ENCODE measurements at regions of chr11 and their contacts with region 1.

Region 1: DNA sequence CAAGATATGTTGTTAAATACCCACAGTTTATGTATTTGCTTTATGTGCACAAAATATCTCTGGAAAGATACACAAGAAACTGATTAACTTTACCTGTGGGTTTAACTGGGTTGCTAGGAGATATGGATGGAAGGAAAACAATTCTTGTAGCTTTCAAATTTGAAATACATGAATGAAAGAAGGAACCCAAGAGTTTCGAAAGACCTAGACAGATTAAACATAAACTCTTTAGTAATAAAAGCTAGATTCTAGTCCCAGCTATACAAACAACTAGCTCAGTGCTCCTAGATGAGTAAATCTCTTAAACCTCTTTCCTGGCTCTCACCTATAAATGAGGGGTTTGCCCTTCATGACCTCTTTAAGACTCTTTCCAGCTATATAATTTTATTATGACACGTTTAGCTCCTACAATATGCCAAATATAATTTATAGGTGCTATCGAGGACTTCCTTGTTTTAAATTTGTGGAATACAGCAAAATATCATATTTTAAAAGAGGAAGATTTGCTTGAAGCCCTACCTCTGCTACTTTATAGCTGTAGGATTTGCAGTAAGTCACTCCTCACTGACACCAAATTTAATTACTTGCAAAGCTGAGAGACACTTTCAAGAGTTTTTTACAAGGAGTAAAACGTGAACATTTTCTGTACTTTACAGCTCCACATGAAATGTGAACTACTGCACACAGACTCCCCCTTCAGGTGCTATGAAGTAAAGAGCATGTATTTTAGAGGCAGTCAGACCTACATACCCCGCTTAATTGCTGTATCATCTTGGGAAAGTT is 50.7 kb downstream of the RRAS2 start:
- DNase-seq: peak in 1 of 2 donors; percentile 64
- ATAC-seq: peak; percentile 79 to 92 (median 88)
- H3K4me3 ChIP-seq: no peak overlapping the region
- H3K4me3 Mint-ChIP-seq: no peak overlapping the region
- H3K27ac ChIP-seq: peak overlapping the region; percentile 41
- H3K27ac Mint-ChIP-seq: no peak overlapping the region
- H3K4me1 ChIP-seq: peaks cover 31% of the 10 kb centered on the region
- H3K4me1 Mint-ChIP-seq: peaks cover 21 to 49% of the 10 kb centered on the region in 2 donors
- H3K27me3 ChIP-seq: no peaks in the 10 kb centered on the region
- H3K27me3 Mint-ChIP-seq: no peaks in the 10 kb centered on the region
- CTCF ChIP-seq: peak; percentile 64

Region 2: DNA sequence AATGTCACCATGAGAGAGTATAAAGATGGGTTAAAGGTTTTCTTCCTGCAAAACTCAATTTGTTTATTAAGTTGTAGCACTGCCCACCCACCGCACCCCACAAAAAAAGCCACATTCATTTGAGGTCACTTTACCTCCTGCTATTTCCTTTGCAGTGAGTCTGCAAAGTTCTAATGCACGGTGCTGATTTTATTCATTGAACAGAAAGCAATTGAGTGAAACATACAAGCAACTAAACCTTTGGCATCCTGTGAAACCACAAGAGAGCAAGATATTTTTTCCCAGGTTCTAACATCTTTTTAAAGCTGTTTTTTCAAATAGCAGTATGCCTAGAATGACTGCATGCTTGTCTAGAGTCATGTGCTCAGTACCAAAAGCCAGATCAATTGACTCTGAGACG is 11.7 kb after region 1 on chr11:
- intact Hi-C with region 1: loop called (anchors 2 kb)
- DNase-seq: peak in 1 of 2 donors; percentile 73
- ATAC-seq: peak; percentile 66 to 79 (median 70)
- H3K4me3 ChIP-seq: no peak overlapping the region
- H3K4me3 Mint-ChIP-seq: peak overlapping the region; percentile 81
- H3K27ac ChIP-seq: no peak overlapping the region
- H3K27ac Mint-ChIP-seq: peak overlapping the region; percentile 81 to 82
- H3K4me1 ChIP-seq: peaks cover 53% of the 10 kb centered on the region
- H3K4me1 Mint-ChIP-seq: peaks cover 84 to 90% of the 10 kb centered on the region in 2 donors
- H3K27me3 ChIP-seq: no peaks in the 10 kb centered on the region
- H3K27me3 Mint-ChIP-seq: no peaks in the 10 kb centered on the region
- CTCF ChIP-seq: no peak

Measured in natural killer cell (primary cell).